Endothelial cell of umbilical vein (primary cell): ENCODE measurements at regions of chr6 and their contacts with region 1.

Region 1: GRCh38 chr6:17469006-17469832 is 75.8 kb downstream of the CAP2 start:
- DNase-seq: peak; percentile 85
- H3K4me3 ChIP-seq: no peak overlapping the region
- H3K27ac ChIP-seq: no peak overlapping the region
- H3K4me1 ChIP-seq: peaks cover 4% of the 10 kb centered on the region
- H3K27me3 ChIP-seq: no peaks in the 10 kb centered on the region
- CTCF ChIP-seq: peak; percentile 39 to 62
- POLR2A ChIP-seq: no peak

Region 2: DNA sequence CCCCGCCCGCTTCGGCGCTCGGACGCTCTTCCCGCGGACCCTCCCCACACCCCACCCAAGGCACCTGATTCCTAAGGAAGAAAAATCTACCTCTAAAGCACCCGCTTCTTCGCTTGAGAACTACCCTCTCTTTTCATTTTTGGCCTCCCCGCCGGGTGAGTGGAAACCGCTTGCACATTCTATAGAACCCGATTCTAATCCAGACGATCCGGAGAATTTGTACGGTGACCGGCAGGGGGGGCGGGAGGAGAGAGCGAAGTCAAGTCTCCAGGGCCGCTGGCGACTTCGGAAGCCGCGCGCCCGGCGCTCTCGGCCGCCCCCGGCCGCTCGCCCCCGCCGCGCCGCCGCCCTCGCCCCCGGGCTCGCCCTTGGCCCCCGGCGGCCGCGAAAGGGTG is 188.1 kb before region 1 on chr6 and contains the start of gene RBM24:
- CTCF ChIA-PET with region 1: no interaction called
- POLR2A ChIA-PET with region 1: no interaction called
- dilution Hi-C with region 1: no loop called
- intact Hi-C with region 1: loop called (anchors 1 kb)
- DNase-seq: peak; percentile 57
- H3K4me3 ChIP-seq: peak within 1 kb of the TSS; percentile 49 to 80 (median 66)
- H3K27ac ChIP-seq: no peak within 1 kb of the TSS
- H3K4me1 ChIP-seq: peaks cover 15% of the 10 kb centered on the region
- H3K27me3 ChIP-seq: no peaks in the 10 kb centered on the region
- CTCF ChIP-seq: peak; percentile 14 to 54
- POLR2A ChIP-seq: no peak
- total RNA-seq, gene RBM24: 6.0 and 6.7 TPM in 2 replicates

Region 3: DNA sequence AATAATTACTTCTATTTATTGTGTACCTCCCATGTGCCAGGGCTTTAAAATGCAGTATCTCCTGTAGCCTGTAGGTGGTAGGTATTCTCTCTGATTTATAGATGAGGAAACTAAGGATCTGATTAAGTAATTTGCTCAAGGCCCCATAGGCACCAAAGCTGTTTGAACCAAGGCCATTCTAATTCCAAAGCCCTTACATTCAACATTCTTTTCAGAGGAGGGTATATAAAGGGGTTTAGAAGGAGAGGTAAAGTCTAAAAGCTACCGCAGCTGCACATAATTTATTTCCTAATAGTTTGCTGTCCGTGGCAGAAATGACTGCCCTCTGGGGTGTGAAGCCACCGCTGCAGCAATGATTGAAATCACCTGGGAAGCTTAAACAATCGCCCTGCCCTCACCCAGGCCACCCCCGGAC is 35.9 kb after region 1 on chr6:
- CTCF ChIA-PET with region 1: interaction called, 12 read pairs
- POLR2A ChIA-PET with region 1: no interaction called
- dilution Hi-C with region 1: no loop called
- intact Hi-C with region 1: loop called (anchors 5 kb)
- DNase-seq: peak; percentile 25
- H3K4me3 ChIP-seq: no peak overlapping the region
- H3K27ac ChIP-seq: no peak overlapping the region
- H3K4me1 ChIP-seq: no peaks in the 10 kb centered on the region
- H3K27me3 ChIP-seq: no peaks in the 10 kb centered on the region
- CTCF ChIP-seq: peak; percentile 4 to 6
- POLR2A ChIP-seq: no peak

Region 4: DNA sequence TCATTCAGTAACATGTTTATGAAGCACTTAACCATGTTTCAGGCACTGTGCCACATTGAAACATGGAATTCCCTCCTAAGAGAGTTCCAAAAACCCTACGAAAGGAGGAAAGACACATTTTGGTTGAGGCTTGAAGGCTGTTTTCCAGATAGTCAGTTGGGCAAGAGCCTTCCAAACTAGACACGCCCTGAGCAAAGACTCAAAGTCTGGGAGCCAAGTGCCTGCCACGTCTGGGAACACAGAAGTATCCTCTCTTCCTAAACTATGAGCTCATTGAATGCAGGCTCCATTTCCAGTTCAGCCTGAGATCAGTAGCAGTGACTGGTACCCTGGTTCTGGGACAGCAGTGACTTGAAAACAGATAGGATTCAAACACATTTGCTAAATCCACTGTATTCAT is 56.4 kb after region 1 on chr6:
- CTCF ChIA-PET with region 1: no interaction called
- POLR2A ChIA-PET with region 1: no interaction called
- dilution Hi-C with region 1: no loop called
- intact Hi-C with region 1: no loop called
- DNase-seq: no peak
- H3K4me3 ChIP-seq: no peak overlapping the region
- H3K27ac ChIP-seq: no peak overlapping the region
- H3K4me1 ChIP-seq: no peaks in the 10 kb centered on the region
- H3K27me3 ChIP-seq: no peaks in the 10 kb centered on the region
- CTCF ChIP-seq: no peak
- POLR2A ChIP-seq: no peak